Calu3 (cell line): ENCODE measurements at regions of chr7 and their contacts with region 1.

Region 1: GRCh38 chr7:116588641-116589594 is 64.1 kb downstream of the CAV1 start:
- DNase-seq: no peak
- H3K4me3 Mint-ChIP-seq: no peak overlapping the region
- H3K27ac Mint-ChIP-seq: no peak overlapping the region
- H3K4me1 Mint-ChIP-seq: peaks cover 37% of the 10 kb centered on the region
- H3K27me3 Mint-ChIP-seq: no peaks in the 10 kb centered on the region
- CTCF ChIP-seq: peak; percentile 47

Region 2: DNA sequence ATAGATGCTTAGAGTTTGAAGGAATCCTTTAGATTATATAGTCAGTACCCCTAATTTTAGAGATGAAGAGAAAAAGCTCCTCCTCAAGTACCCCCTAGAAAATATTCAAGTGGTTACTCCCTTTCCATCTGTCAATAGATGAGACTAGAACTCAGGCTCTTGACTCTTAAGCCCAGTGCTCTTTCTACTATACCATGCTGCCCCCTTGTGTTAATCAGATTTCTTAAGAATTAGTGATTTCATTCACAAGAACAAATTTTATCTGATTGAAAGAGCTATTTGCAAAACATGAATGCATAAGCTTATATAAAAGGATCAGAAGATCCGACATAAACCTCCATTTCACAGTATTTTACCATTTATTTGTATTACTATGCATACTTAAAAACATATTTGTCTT is 737.6 kb before region 1 on chr7:
- CTCF ChIA-PET with region 1: no interaction called
- intact Hi-C with region 1: no loop called
- DNase-seq: peak; percentile 6
- H3K4me3 Mint-ChIP-seq: no peak overlapping the region
- H3K27ac Mint-ChIP-seq: no peak overlapping the region
- H3K4me1 Mint-ChIP-seq: no peaks in the 10 kb centered on the region
- H3K27me3 Mint-ChIP-seq: no peaks in the 10 kb centered on the region
- CTCF ChIP-seq: peak; percentile 41

Region 3: DNA sequence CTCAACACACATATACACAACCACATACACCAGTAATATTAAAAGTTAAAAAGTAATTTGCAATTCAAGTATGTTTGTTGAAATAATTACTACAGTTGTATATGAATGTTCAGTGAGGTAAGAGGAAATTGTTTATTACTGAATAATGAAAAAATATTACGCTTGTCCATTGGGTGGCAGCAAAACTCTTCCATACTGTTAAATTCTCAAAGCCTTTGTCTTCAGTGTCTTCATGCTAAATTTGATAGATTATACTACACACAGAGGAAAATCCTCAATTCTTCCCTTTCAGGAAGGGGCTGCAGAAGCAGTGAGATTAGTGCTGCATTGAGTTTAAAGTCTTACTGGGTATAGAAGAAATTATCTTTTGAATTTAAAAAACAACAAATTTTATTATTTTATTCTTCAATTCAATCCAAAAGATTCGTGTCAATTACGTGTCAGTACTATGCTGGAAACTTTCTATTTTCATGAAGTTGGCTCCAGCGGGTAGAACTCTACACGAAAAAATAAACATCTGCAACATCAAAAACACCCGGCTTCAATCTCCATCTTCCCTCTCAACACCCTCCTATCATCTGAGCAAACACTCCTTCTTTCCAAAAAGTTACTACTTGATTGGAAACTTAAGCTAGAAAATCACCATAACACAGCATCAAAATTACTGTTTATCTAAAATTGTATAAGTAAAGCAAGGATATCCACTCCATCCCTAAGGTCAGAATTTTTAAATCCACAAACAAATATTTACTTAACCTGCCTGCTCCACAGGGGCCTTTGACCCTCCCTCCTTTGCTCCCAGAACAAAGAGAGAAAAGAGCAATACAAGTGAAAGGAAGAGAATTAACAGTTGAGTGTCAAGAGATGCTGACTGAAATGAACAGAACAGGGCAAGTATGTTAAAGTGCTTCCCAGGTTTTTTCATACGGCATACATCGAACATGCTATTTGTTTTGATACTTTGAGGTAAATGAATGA is 415.6 kb before region 1 on chr7:
- CTCF ChIA-PET with region 1: no interaction called
- intact Hi-C with region 1: loop called (anchors 2 kb)
- DNase-seq: peak; percentile 38
- H3K4me3 Mint-ChIP-seq: no peak overlapping the region
- H3K27ac Mint-ChIP-seq: no peak overlapping the region
- H3K4me1 Mint-ChIP-seq: peaks cover 23% of the 10 kb centered on the region
- H3K27me3 Mint-ChIP-seq: peaks cover 17% of the 10 kb centered on the region
- CTCF ChIP-seq: peak; percentile 25

Region 4: DNA sequence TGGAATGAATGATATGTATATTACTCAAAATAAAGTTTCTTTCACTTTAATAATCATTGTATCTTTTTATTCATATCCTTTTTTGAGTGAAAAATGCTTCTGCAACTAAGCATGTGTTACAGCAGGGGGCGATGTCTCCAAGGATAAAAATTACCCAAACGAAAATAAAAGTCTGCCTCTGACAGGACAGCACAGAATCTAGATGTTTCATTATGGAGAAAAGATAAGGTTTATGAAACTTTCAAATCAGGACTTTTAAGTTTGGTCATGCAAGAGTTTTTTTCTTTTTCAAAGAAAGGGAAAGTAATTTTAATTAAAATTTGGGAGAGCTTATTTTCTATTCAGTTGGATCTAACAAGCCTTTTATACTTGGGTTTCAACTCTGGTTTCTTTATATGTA is 330.2 kb before region 1 on chr7:
- CTCF ChIA-PET with region 1: interaction called, 19 read pairs
- intact Hi-C with region 1: loop called (anchors 1 kb)
- DNase-seq: peak; percentile 54
- H3K4me3 Mint-ChIP-seq: no peak overlapping the region
- H3K27ac Mint-ChIP-seq: peak overlapping the region; percentile 69
- H3K4me1 Mint-ChIP-seq: peaks cover 20% of the 10 kb centered on the region
- H3K27me3 Mint-ChIP-seq: no peaks in the 10 kb centered on the region
- CTCF ChIP-seq: peak; percentile 53

Region 5: DNA sequence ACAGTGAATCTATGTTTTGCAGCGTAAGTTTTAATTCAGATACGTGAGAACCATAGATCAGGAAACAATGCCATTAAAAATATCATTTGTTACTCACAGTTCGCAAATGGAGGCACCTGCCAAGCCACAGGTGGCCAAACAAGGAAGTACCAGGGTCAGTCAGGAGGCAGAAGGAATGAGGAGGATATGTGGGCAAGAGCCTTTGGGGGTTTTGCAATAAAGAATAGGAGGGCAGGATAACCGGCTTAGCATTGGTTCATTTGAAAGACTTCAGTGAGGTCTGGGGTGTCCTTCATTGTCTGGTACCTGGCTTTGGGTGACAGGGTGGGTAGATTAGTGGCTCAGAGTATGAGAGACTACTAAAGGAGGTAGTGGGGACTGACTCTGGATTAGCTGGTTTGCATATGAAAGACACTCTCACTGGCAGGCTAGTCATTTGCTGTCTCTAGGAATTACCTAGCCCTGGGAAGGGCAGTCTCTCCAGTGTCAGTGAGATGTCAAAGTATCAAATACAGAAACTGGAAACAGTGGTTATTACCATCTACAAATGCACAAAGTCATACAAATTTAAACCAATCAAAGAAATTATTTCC is 221.6 kb before region 1 on chr7:
- CTCF ChIA-PET with region 1: no interaction called
- intact Hi-C with region 1: no loop called
- DNase-seq: peak; percentile 55
- H3K4me3 Mint-ChIP-seq: peak overlapping the region; percentile 11
- H3K27ac Mint-ChIP-seq: peak overlapping the region; percentile 92
- H3K4me1 Mint-ChIP-seq: peaks cover 23% of the 10 kb centered on the region
- H3K27me3 Mint-ChIP-seq: no peaks in the 10 kb centered on the region
- CTCF ChIP-seq: no peak

Region 6: DNA sequence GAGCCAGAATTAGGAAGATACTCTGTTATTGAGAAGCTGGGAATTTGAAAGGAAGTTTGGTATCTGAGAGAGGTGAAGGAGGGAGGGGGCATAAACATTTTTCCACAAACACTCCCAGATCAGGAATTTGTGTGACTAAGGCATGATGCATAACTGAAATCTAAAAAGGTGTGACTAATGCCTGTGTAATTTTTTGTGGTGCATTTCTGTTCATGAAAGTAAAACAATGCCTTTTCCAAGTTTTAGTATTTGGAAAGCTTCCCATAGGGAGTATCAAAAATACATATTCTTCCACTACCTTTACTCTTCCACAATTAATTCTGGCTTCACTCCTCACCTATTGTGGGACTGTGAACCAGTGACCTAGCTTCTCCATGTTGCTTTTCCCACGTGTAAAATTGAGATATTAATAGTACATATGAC is 145.8 kb before region 1 on chr7:
- CTCF ChIA-PET with region 1: interaction called, 15 read pairs
- intact Hi-C with region 1: loop called (anchors 2 kb)
- DNase-seq: peak; percentile 36
- H3K4me3 Mint-ChIP-seq: no peak overlapping the region
- H3K27ac Mint-ChIP-seq: peak overlapping the region; percentile 71
- H3K4me1 Mint-ChIP-seq: peaks cover 65% of the 10 kb centered on the region
- H3K27me3 Mint-ChIP-seq: no peaks in the 10 kb centered on the region
- CTCF ChIP-seq: no peak

Region 7: GRCh38 chr7:116809636-116810266 is 220.8 kb after region 1 on chr7:
- CTCF ChIA-PET with region 1: interaction called, 7 read pairs
- intact Hi-C with region 1: loop called (anchors 1 kb)
- DNase-seq: peak; percentile 57
- H3K4me3 Mint-ChIP-seq: peak overlapping the region; percentile 36
- H3K27ac Mint-ChIP-seq: peak overlapping the region; percentile 64
- H3K4me1 Mint-ChIP-seq: peaks cover 64% of the 10 kb centered on the region
- H3K27me3 Mint-ChIP-seq: no peaks in the 10 kb centered on the region
- CTCF ChIP-seq: peak; percentile 30